PC-3 (cell line): ENCODE measurements at regions of chr3 and their contacts with region 1.

Region 1: DNA sequence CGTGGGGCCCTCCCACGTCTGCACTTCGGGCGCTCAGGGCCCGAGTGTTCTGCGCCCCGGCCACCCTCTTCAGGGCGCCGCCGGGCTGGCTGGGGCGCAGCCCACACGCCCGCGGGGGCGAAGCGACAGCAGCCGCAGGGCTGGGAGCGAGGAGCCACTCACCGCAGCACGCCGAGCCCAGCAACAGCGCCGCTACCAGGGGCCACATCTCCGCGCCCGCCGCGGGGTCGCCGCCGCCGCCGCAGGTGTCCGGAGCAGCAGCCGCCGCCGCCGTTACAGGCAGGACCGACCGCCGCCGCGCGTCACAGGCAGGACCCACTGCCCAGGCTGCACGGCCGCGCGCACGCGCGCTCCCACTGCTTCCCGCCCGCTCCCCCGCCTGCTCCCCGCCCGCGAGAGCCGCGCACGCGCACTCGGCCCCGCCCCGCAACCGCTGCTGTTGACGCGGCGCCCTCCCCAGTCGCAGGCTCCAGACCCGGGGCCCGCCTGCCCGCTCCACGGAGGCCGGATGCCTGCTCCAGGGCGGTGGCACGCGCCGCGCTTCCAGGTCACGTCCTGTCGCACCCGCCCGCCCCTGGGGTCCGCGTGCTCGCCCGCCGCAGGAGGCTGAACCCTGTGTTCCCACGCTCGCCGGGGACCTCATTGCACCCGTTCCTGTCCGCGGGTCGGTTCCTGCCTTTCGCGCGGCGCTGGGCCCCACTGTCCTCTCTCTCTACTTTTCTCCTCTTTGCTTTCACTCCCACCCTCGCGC is at the start of gene CD47:
- DNase-seq: peak; percentile 92
- ATAC-seq: peak; percentile 79
- H3K4me3 ChIP-seq: peak within 1 kb of the TSS; percentile 96
- H3K27ac ChIP-seq: peak within 1 kb of the TSS; percentile 17
- H3K4me1 ChIP-seq: peaks cover 15% of the 10 kb centered on the region; the same call in 1 of the 2 replicates
- H3K27me3 ChIP-seq: no peaks in the 10 kb centered on the region
- CTCF ChIP-seq: no peak
- total RNA-seq, gene CD47: 48.4 and 63.6 TPM in 2 replicates

Region 2: DNA sequence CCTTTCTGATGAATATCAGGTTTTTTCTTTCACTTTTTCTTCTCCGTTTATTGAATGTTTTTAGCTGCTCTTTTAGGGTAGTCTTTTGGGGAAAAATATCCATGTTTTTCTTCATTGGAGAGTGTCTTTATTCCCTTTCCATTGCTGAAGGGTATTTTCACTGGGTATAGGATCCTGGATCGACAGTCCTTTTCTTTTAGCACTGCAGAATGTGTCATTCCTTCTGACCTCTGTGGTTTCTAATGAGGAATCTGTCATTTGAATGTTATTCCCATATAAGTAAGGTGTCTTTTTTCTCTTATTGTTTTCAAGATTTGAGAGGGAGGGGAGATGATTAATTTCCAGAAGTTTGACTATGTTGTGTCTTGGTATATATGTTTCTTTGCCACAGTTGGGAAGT is 471.3 kb before region 1 on chr3:
- CTCF ChIA-PET with region 1: no interaction called
- POLR2A ChIA-PET with region 1: no interaction called
- intact Hi-C with region 1: no loop called
- DNase-seq: peak; percentile 26
- ATAC-seq: peak; percentile 56
- H3K4me3 ChIP-seq: no peak overlapping the region
- H3K27ac ChIP-seq: no peak overlapping the region
- H3K4me1 ChIP-seq: no peaks in the 10 kb centered on the region
- H3K27me3 ChIP-seq: no peaks in the 10 kb centered on the region
- CTCF ChIP-seq: no peak

Region 3: DNA sequence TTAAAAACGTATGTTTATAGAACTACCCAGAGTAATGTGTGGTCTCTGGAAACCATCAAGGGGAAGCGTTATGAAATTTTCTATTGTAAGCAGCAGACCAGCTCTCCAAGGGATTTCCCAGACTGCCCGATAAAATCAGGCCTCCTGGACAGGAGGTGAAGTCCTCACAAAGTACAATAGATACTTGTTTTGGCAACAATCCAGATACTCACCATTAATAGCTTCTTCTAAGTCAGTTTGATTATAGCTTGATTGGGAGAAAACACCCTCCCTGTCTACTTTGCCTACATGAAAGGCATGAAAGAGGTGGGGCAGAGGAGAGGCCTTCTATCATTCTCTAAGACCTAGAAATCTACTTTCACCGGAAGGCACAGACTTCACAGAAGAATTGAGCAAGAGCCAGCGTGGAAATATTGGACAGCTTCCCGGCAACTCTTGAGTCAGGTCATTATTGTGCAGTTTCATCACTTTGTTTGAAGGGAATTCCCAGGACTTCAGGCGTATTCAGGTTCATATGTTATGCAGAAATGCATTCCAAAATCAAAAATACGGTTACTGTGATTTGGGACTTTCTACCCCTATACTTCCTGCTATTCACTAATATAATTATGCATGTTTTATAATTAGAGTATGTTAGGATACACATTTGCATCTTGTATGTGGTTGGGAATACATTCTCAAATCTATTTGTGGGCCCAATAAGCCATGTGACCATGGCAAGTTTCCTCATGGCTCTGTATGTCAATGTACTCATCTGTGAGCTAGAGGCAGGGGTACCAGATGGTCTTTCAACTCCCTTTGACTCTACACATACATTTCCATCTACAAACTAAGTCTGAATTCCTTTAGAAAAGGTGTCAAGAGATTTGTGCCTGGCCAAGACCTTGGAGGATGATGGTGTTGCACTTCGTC is 103.6 kb before region 1 on chr3:
- CTCF ChIA-PET with region 1: no interaction called
- POLR2A ChIA-PET with region 1: no interaction called
- intact Hi-C with region 1: loop called (anchors 2 kb)
- DNase-seq: peak; percentile 98
- ATAC-seq: peak; percentile 52
- H3K4me3 ChIP-seq: no peak overlapping the region
- H3K27ac ChIP-seq: peak overlapping the region; percentile 94
- H3K4me1 ChIP-seq: peaks cover 58% of the 10 kb centered on the region
- H3K27me3 ChIP-seq: no peaks in the 10 kb centered on the region
- CTCF ChIP-seq: no peak

Region 4: GRCh38 chr3:108130701-108131474 is 40.0 kb after region 1 on chr3:
- CTCF ChIA-PET with region 1: interaction called, 9 read pairs
- POLR2A ChIA-PET with region 1: interaction called, 5 read pairs
- intact Hi-C with region 1: loop called (anchors 1 kb)
- DNase-seq: peak; percentile 95
- ATAC-seq: peak; percentile 86
- H3K4me3 ChIP-seq: no peak overlapping the region
- H3K27ac ChIP-seq: peak overlapping the region; percentile 90
- H3K4me1 ChIP-seq: peaks cover 38% of the 10 kb centered on the region
- H3K27me3 ChIP-seq: no peaks in the 10 kb centered on the region
- CTCF ChIP-seq: no peak

Region 5: GRCh38 chr3:108180194-108180593 is 89.3 kb after region 1 on chr3:
- CTCF ChIA-PET with region 1: no interaction called
- POLR2A ChIA-PET with region 1: no interaction called
- intact Hi-C with region 1: loop called (anchors 5 kb)
- DNase-seq: peak; percentile 58
- ATAC-seq: peak; percentile 32
- H3K4me3 ChIP-seq: no peak overlapping the region
- H3K27ac ChIP-seq: peak overlapping the region; percentile 19
- H3K4me1 ChIP-seq: peaks cover 36% of the 10 kb centered on the region
- H3K27me3 ChIP-seq: no peaks in the 10 kb centered on the region
- CTCF ChIP-seq: no peak

Region 6: DNA sequence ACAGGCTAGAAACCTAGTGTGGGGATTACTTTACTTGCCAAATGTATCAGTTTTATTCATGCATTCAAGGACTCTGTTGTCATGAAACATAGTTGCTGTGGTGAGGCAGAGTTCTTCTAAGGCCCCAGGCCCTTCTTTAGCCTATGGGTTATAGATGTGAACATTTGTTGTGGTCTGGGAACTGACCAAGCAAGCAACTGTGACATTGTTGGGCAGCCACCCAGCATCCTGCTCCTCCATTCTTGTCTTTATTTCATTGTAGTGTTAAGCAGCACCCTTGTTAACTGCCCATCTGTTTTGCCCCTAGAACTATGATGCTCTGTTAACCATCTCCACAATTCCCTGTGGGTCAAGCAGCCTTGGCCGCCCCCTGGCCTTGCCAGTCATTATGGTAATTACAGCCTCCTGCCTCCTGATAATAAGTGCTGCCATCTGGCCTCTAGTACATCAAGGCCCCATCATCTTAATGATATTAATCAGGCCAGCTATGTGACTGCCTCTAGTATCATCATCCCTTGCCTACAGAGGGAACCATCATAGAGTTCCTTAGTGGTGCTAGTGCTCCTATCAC is 143.6 kb after region 1 on chr3:
- CTCF ChIA-PET with region 1: no interaction called
- POLR2A ChIA-PET with region 1: no interaction called
- intact Hi-C with region 1: no loop called
- DNase-seq: no peak
- ATAC-seq: no peak
- H3K4me3 ChIP-seq: no peak overlapping the region
- H3K27ac ChIP-seq: no peak overlapping the region
- H3K4me1 ChIP-seq: no peaks in the 10 kb centered on the region
- H3K27me3 ChIP-seq: no peaks in the 10 kb centered on the region
- CTCF ChIP-seq: no peak

Region 7: DNA sequence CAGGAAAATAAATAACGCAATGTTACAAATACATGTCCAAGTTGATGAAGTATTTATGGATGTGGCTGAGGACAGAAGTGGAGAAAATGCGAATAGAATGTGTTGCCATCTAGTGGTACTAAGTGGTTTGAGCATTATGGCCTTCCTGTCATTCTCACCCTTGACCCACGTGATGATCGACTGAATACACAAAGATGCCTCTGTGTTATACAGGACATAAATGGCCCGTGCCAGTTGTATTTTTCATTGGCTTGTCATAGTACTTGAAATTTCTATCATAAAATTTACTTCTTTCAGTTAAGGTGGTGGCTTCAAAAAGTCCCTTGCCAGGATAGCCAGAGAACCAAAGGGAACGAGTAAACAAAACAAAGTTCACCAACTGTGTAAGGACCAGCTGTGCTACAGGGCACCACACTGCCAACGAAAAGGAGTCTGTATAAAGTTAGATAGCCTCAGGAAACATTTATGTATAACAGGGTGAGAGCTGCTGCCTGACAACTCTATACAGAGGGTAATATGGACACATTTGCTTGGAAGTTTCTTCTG is 315.9 kb after region 1 on chr3:
- CTCF ChIA-PET with region 1: no interaction called
- POLR2A ChIA-PET with region 1: no interaction called
- intact Hi-C with region 1: loop called (anchors 1 kb)
- DNase-seq: peak; percentile 74
- ATAC-seq: peak; percentile 89
- H3K4me3 ChIP-seq: no peak overlapping the region
- H3K27ac ChIP-seq: no peak overlapping the region
- H3K4me1 ChIP-seq: peaks cover 9% of the 10 kb centered on the region
- H3K27me3 ChIP-seq: no peaks in the 10 kb centered on the region
- CTCF ChIP-seq: peak; percentile 80

Region 8: GRCh38 chr3:108448593-108448992 is 357.7 kb after region 1 on chr3:
- CTCF ChIA-PET with region 1: no interaction called
- POLR2A ChIA-PET with region 1: no interaction called
- intact Hi-C with region 1: no loop called
- DNase-seq: no peak
- ATAC-seq: no peak
- H3K4me3 ChIP-seq: no peak overlapping the region
- H3K27ac ChIP-seq: no peak overlapping the region
- H3K4me1 ChIP-seq: no peaks in the 10 kb centered on the region
- H3K27me3 ChIP-seq: no peaks in the 10 kb centered on the region
- CTCF ChIP-seq: no peak